ENCODE measurements at regions of chr9 and their contacts with region 1.

Region 1: DNA sequence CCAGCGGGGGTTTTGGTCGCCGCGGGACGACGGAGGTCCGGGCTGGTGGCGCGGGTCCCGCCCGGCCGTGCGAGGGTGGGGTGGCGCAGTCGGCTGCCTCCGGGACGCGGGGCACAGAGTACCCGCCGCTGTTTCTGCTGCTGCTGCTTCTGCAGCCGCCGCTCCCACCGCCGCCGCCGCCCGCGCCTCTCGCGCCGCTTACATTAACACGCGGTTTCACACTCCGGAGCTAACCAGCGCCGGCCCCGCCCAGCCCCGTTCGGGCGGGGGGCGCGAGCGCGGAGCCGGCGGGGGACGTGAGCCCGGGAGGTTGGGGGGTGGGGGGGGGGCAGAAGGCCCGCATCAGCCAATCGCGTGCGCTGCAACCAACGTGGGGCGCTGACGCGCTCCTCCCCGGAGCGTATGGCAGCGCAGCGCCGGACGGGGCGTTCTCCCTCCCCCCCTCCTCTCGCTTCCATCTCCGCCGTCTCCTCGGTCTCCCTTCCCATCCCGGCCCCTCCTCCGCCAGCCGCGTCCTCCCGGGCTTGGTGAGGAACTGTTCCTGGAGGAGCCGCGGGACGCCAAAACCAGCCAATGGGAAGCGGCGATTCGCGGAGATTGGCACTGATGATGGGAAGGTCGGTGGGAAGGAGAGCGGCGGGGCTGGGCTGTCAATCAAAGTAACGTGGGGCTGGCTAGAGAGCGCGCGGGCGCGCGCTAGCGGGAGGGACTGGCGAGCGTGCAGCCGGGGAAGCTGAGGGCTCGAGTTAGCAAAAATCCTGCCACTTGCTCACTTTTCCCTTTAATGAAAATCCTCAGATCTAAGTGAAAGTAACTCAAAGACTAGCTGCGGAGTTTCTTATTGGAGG is at the start of gene TLE1:
- DNase-seq: peak; percentile 99
- H3K4me3 ChIP-seq: peak within 1 kb of the TSS; percentile 85
- H3K27ac ChIP-seq: peak within 1 kb of the TSS; percentile 89
- H3K4me1 ChIP-seq: peaks cover 55% of the 10 kb centered on the region
- H3K27me3 ChIP-seq: peaks cover 30% of the 10 kb centered on the region
- CTCF ChIP-seq: no peak
- total RNA-seq, gene TLE1: 8.5 TPM

Region 2: GRCh38 chr9:81759668-81760215 is 70.2 kb after region 1 on chr9:
- intact Hi-C with region 1: no loop called
- DNase-seq: no peak
- H3K4me3 ChIP-seq: no peak overlapping the region
- H3K27ac ChIP-seq: peak overlapping the region; percentile 4
- H3K4me1 ChIP-seq: no peaks in the 10 kb centered on the region
- H3K27me3 ChIP-seq: no peaks in the 10 kb centered on the region
- CTCF ChIP-seq: no peak

Region 3: GRCh38 chr9:81848472-81848871 is 158.9 kb after region 1 on chr9:
- intact Hi-C with region 1: loop called (anchors 10 kb)
- DNase-seq: no peak
- H3K4me3 ChIP-seq: no peak overlapping the region
- H3K27ac ChIP-seq: no peak overlapping the region
- H3K4me1 ChIP-seq: peaks cover 16% of the 10 kb centered on the region
- H3K27me3 ChIP-seq: peaks cover 7% of the 10 kb centered on the region
- CTCF ChIP-seq: peak; percentile 53

Measured in left ventricle myocardium inferior (tissue), 1 donor.